GM13977 (cell line): ENCODE measurements at regions of chr18 and their contacts with region 1.

Region 1: DNA sequence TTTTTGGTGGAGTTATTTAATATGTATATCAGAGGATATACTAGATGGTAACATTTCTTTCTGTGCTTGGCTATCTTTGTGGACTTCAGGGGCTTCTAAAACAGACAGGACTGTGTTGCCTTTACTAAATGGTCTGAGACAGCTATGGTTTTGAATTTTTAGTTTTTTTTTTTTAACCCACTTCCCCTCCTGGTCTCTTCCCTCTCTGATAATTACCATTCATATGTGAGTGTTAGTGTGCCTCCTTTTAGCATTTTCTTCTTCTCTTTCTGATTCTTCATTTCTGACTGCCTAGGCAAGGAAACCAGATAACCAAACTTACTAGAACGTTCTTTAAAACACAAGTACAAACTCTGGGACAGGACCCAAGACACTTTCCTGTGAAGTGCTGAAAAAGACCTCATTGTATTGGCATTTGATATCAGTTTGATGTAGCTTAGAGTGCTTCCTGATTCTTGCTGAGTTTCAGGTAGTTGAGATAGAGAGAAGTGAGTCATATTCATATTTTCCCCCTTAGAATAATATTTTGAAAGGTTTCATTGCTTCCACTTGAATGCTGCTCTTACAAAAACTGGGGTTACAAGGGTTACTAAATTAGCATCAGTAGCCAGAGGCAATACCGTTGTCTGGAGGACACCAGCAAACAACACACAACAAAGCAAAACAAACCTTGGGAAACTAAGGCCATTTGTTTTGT is 52.7 kb downstream of the SMAD4 start:
- DNase-seq: peak; percentile 18
- CTCF ChIP-seq: no peak

Region 2: DNA sequence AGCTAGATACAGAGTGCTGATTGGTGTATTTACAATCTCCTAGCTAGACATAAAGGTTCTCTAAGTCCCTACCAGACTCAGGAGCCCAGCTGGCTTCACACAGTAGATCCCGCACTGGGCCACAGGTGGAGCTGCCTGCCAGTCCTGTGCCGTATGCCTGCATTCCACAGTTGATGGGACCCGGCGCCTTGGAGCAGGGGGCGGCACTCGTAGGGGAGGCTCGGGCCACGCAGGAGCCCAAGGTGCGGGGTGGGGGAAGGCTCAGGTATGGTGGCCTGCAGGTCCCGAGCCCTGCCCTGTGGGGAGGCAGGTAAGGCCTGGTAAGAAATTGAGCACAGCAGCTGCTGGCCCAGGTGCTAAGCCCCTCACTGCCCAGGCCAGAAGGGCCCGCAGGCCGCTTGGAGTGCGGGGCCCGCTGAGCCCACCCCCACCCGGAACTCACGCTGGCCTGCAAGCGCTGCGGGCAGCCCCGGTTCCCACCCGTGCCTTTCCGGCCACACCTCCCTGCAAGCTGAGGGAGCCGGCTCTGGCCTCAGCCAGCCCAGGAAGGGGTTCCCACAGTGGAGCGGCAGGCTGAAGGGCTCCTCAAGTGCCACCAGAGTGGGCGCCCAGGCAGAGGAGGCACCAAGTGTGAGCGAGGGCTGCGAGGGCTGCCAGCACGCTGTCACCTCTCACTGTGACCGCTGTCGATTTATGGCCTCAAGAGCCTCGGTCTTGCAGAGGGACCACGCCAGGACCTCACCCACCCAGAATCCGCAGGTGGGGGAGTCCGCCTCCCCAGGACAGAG is 38.3 kb after region 1 on chr18:
- in situ Hi-C with region 1: no loop called
- DNase-seq: no peak
- CTCF ChIP-seq: no peak

Region 3: DNA sequence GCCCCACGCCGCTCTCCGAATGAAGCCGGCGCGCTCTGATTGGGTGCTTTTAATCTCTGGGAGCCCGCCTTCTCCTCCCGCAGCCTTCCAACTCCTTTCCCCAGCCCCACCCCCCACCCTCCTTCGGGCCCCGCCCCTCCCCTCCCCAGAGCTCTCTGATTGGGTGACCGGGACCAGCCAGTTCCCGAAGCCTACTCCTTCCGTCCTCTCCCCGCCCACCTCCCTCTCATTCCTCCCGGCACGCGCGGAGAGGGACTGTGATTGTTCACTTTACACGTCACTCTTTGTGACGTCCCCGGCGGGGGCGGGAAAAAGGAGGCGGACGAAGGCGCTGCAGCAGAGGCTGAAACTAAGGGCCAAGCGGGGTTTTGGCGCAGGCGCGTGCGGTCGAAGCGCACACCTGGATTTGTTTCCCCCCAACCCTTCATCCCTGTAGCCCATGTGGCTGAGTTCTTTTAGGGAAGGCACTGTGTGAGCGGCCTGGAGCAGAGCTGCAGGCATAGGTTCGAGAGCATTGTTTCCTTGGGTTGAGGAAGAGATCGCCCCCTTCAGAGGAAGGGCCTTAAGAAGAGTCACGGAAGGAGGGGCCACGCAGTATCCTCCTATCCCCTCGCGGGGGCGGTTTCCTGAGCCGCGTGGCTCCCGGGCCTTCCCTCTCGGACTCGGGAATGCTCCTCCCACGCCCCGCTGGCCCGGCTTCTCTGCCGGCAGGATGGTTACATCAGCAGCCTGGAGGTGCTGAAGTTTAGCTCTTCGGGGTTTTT is 115.1 kb after region 1 on chr18 and contains the start of gene MEX3C:
- in situ Hi-C with region 1: loop called (anchors 25 kb)
- DNase-seq: peak; percentile 94
- CTCF ChIP-seq: no peak